ENCODE measurements at regions of chr2 and their contacts with region 1.

Region 1: DNA sequence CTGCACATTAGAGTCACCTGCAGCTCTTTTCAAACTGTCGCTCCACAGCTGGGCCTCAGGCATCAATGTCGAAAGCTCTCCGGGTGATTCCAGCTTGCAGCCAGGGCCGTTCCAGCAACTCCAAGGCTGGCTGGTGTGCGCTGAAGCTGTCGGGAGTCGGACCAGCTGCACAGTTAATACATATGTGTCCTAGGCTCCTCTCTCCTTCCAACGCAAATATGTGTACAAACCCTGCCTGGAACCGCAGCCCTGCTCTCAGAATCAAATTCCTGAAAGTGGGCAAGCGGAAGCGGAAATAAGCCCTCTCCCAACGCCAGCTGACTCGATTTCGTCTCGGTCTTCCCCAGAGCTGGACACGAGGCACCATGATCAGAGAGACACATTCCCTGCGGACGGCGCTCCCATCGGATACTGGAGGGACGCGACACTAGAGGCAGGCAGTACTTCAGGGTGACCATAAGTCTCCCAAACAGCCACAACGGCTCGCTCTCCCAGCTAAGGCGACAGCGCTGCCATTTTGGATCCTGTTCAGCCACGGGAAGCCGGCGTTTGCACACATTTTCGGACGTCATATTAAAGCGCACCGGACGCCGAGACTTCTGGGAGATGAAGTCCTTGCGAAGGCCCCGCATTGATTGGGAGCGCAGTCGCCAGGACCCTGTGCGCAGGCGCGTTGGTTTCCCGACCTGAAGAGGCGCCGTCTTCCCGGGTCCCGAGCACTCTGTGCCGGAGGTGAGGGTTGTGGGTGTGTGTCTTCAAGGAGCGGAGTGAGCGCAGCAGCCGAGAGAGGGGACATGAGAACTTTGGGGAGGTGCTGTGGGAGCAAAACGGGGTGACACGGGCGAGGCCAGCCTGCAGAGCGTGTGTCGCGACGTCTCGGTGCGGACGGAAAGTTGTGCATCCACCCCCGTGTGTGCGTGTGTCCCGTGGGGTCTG is at the start of gene ZNF2:
- DNase-seq: peak; percentile 97 to 100 (median 99)

Region 2: DNA sequence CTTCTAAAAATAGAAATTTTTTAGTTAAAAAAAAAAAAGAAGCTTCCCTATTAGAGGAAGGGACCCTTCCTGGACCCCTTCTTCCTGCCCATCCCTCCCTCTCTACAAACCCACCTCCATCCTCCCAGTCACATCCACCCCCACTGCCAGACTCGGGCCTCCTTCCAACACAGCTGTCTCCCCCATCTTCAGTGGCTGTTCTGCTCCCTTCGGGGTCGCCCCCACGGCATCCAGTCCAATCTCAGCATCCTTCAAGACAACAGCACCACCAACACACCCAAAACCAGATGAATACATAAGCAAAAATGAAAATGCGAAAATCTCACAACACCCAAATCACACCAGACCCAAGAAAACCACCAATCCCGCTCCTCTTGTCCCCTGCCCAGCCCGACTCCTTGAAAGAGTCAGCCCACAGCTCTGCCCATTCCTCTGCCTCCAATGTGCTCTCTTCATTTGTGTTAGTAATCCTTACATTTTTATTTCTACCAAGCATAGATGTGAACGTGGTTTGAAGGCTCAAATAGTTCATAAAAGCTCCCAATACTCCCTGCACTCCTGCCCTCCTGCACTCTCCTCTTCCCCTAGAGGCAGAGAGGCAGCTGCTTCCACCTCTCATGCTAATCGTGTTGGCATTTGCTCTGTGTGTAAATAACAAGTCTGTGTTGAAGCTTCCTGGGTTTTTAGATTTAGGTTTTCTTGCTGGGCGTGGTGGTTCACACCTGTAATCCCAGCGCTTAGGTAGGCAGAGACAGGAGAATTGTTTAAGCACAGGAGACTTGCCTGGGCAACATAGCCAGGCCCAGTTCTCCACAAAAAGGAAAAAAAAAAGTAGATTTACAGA is 102.9 kb before region 1 on chr2:
- intact Hi-C with region 1: no loop called
- DNase-seq: peak in 2 of 10 donors; percentile 17 to 62

Region 3: DNA sequence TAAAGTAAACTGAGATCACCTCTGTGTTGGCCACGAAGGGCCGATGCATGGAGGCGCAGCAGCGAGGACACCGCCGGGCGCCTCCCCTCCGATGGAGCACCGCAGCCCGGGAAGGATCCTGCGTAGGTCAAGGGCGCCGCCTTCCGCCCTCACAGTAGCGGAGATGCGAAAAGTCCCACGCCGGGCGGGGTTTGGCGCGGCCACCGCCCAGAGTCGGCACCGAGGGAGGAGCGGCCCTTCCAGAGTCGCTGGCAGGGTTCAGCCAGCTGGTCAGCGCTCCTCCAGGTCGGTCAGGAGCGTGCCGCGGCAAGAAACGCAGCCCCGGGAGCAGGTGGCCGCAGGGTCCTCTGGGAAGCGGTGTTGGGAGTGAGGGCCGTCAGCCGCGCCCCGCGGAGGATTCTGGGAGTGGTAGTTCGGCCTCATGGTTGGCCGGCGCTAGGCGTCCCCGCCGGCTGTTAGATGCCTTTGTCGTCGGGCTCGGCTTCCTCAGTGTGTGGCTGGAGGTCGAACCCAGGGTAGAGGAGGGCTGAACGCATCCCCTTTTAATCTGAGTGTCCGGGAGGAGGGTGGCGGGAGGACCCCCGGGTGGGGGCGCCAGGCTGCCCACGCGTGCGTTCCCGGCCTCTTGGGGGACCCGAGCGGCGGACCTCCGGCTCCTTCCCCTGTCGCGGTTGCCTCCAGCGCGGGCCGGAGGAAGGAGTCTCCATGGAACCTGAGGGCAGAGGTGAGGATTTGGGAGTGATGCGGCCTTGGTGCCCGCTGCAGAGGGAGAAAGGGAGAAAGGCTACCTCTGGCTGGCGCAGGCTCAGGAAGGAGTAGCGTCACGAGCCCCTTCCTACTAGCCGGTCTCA is 41.9 kb after region 1 on chr2 and contains the start of gene ZNF892:
- intact Hi-C with region 1: loop called (anchors 1 kb)
- DNase-seq: peak; percentile 91 to 99 (median 92)

Region 4: DNA sequence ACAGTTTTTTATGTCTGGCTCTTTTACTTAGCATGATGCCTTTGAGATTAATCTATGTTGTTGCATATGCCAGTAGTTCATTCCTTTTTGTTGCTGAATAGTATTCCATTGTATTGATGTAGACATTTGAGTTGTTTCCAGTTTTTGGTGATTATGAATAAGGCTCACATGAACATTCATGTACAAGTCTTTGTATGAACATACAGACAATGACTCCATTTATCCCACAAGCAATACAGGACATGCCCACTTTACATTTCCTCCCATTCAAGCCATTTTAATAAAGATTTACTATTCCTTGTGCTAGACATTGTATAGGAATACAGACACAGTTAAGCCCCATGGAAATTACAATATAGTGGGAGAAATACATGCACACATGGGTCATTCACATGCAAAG is 544.4 kb after region 1 on chr2:
- intact Hi-C with region 1: no loop called
- DNase-seq: no peak

Measured in posterior cingulate gyrus (tissue), 11 donors.